ENCODE measurements at regions of chr15 and their contacts with region 1.

Region 1: DNA sequence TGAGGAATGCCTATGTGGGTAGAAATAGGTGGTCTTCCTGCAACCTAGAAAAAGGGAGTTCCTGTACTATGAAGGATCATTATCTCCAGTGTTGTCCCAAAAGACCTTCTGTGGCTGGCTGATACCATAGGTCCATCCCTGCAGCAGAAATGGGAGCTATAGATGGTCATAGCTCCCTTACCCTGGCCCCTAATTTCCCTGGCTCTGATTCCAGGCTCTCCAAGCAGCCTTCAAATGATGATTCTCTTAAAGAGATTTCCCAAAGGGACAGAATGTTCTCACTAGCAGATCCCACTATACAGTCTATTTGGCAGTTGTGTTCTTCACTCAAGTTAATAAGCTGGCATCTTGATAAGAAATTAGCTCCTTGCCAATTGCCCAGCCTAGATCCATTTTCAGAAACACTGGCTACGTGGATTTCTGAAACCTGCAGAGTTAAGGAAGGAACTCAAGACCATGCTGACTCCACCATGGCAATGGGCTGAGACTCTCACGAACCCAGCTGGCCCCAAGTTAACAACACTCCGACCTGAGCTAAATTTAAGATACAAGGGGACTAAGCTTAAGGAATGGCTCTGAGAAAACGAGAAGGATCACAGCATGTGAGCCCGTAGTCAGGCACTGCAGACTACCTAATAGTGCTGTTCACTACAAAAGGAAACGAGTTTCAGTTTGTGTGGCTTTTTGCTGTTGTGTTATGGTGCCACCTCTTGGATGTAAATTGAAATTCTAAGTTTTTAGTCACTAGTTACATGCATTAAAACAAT is 11.4 kb downstream of the C15orf40 start:
- DNase-seq: peak; percentile 23
- H3K4me3 Mint-ChIP-seq: peak overlapping the region; percentile 46
- H3K27ac Mint-ChIP-seq: no peak overlapping the region
- H3K4me1 Mint-ChIP-seq: peaks cover 8% of the 10 kb centered on the region
- H3K27me3 Mint-ChIP-seq: no peaks in the 10 kb centered on the region

Region 2: DNA sequence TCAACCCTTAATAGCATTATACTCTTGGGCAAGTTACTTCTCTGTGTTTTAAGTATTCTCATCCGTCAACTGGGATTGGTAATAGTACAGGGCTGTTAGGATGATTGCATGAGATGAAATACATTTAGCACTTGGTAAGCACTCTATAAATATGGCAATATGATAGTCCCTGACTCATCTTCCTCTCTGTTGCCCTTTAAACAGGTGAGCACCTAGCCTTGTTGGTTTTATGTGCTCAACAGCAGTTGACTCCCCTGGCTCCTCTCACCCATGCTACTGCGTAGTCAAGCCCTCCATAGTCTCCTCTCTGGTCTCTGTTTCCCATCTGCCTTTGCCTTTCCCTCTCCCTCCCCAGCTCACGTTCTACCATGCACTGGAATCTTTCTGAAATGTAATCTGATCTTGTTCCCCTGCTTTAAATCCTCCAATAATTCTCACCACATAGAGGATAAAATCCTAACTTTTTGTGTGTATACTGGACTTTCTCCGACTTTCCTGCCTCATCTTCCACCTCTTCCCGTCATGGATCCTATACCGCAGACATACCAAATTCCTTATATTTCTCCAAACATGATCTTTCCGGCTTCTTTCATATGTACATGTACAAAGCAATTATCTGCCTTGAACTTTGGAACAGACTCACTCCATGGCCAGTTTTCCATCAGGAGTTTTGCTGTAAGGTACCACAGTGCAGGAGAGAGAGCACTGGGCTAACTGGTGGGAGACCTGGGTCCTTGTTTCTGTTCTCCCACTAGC is 236.5 kb before region 1 on chr15:
- intact Hi-C with region 1: no loop called
- DNase-seq: no peak
- H3K4me3 Mint-ChIP-seq: no peak overlapping the region
- H3K27ac Mint-ChIP-seq: peak overlapping the region; percentile 1
- H3K4me1 Mint-ChIP-seq: peaks cover 10% of the 10 kb centered on the region
- H3K27me3 Mint-ChIP-seq: no peaks in the 10 kb centered on the region

Region 3: GRCh38 chr15:82849556-82850512 is 150.3 kb before region 1 on chr15:
- intact Hi-C with region 1: loop called (anchors 1 kb)
- DNase-seq: peak; percentile 50
- H3K4me3 Mint-ChIP-seq: no peak overlapping the region
- H3K27ac Mint-ChIP-seq: no peak overlapping the region
- H3K4me1 Mint-ChIP-seq: peaks cover 10% of the 10 kb centered on the region
- H3K27me3 Mint-ChIP-seq: peaks cover 4% of the 10 kb centered on the region

Measured in activated T-helper 2 cell treated with anti-CD3 and anti-CD28 coated beads, Interferon-gamma antibody, Interleukin-2, Interleukin-4, amounts not matched to agents 10 μg/mL and 5 μg/mL and 100 μg/mL, durations not matched to agents 14 hours and 24 hours and 36 hours (primary cell).